ENCODE measurements at regions of chr4 and their contacts with region 1.

Region 1: DNA sequence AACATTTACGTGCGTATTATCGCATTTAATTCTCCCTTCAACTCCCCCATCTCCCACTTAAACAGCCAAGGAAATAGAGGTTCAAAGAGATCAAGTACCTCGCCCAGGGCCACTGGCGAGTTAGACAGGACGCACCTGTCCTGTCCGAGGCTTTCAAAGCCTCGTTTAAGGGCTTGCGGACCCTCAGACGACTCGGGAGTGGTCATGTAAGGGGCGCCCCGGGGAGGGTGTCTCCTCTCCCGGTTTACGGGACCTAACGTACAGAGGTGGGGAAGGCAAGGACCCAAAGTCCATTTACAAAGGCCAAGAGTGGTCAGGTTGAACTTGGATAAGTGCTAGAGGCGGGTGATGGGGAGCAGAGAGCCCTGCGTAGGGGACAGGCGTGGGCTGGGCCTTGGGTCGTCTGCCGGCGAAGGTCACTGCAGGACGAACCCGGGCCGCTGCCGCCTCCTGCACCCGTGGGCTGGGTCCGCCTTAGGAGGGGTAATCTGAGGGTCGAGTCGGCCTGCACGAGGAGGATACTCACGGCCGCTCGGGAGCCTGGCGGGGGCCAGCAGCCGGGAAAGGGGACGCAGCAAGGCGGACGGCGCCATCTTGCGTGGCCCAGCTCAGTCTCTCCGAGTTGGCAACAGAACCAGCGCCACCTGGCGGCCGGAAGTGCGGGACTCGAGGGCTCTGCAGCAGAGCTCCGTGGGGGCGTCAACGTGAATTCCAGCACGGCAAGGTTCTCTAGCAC is 5.9 kb upstream of the NAA15 start:
- DNase-seq: peak; percentile 92
- ATAC-seq: peak; percentile 87
- H3K4me3 ChIP-seq: peak overlapping the region; percentile 89
- H3K27ac ChIP-seq: peak overlapping the region; percentile 42
- H3K4me1 ChIP-seq: peaks cover 35% of the 10 kb centered on the region
- H3K27me3 ChIP-seq: no peaks in the 10 kb centered on the region
- CTCF ChIP-seq: peak; percentile 76

Region 2: GRCh38 chr4:139099366-139099982 is 195.9 kb before region 1 on chr4:
- CTCF ChIA-PET with region 1: no interaction called
- POLR2A ChIA-PET with region 1: no interaction called
- intact Hi-C with region 1: loop called (anchors 5 kb)
- DNase-seq: peak; percentile 81
- ATAC-seq: peak; percentile 57
- H3K4me3 ChIP-seq: no peak overlapping the region
- H3K27ac ChIP-seq: no peak overlapping the region
- H3K4me1 ChIP-seq: no peaks in the 10 kb centered on the region
- H3K27me3 ChIP-seq: no peaks in the 10 kb centered on the region
- CTCF ChIP-seq: peak; percentile 81

Region 3: DNA sequence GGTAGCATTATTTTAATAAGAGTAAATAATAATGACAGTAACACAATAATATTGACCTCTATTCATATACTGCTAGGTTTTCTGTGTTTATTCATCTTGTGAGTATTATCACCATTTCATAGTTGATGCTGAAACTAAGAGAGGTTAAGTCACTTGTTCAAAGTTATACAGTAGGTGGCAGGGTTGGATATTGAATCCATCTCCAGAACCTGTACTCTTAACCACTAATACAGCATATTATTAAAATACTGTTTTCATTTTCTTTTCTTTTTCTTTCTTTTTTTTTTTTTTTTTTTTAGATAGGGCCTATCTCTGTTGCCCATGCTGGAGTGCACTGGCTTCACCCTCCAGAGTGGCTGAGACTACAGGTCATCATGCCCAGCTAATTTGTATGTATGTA is 111.2 kb before region 1 on chr4:
- CTCF ChIA-PET with region 1: no interaction called
- POLR2A ChIA-PET with region 1: no interaction called
- intact Hi-C with region 1: loop called (anchors 2 kb)
- DNase-seq: peak; percentile 31
- ATAC-seq: peak; percentile 76
- H3K4me3 ChIP-seq: no peak overlapping the region
- H3K27ac ChIP-seq: no peak overlapping the region
- H3K4me1 ChIP-seq: no peaks in the 10 kb centered on the region
- H3K27me3 ChIP-seq: no peaks in the 10 kb centered on the region
- CTCF ChIP-seq: peak; percentile 39; the same call in 1 of the 2 replicates

Region 4: GRCh38 chr4:139243448-139244365 is 51.7 kb before region 1 on chr4:
- CTCF ChIA-PET with region 1: no interaction called
- POLR2A ChIA-PET with region 1: no interaction called
- intact Hi-C with region 1: loop called (anchors 2 kb)
- DNase-seq: peak; percentile 91
- ATAC-seq: peak; percentile 81
- H3K4me3 ChIP-seq: no peak overlapping the region
- H3K27ac ChIP-seq: peak overlapping the region; percentile 88
- H3K4me1 ChIP-seq: peaks cover 41% of the 10 kb centered on the region
- H3K27me3 ChIP-seq: no peaks in the 10 kb centered on the region
- CTCF ChIP-seq: no peak